AG04450 (cell line): ENCODE measurements at regions of chr10 and their contacts with region 1.

Region 1: GRCh38 chr10:73979141-73979808 is 18.6 kb upstream of the VCL start:
- DNase-seq: no peak
- H3K4me3 ChIP-seq: no peak overlapping the region
- H3K27ac ChIP-seq: no peak overlapping the region
- H3K27me3 ChIP-seq: no peaks in the 10 kb centered on the region
- CTCF ChIP-seq: no peak

Region 2: GRCh38 chr10:73926152-73926764 is 53.0 kb before region 1 on chr10:
- CTCF ChIA-PET with region 1: interaction called, 12 read pairs
- POLR2A ChIA-PET with region 1: no interaction called
- DNase-seq: no peak
- H3K4me3 ChIP-seq: no peak overlapping the region
- H3K27ac ChIP-seq: no peak overlapping the region
- H3K27me3 ChIP-seq: no peaks in the 10 kb centered on the region
- CTCF ChIP-seq: no peak

Region 3: GRCh38 chr10:73998929-73999691 is 19.8 kb after region 1 on chr10:
- CTCF ChIA-PET with region 1: no interaction called
- POLR2A ChIA-PET with region 1: no interaction called
- DNase-seq: peak; percentile 55
- H3K4me3 ChIP-seq: peak overlapping the region; percentile 94
- H3K27ac ChIP-seq: peak overlapping the region; percentile 90
- H3K27me3 ChIP-seq: no peaks in the 10 kb centered on the region
- CTCF ChIP-seq: peak; percentile 70